CD8-positive, alpha-beta T cell (primary cell): ENCODE measurements at regions of chr5 and their contacts with region 1.

Region 1: GRCh38 chr5:111223889-111224563 is at the start of gene CAMK4:
- DNase-seq: peak; percentile 70 to 94 (median 84)
- ATAC-seq: peak; percentile 88
- H3K4me3 ChIP-seq: peak within 1 kb of the TSS; percentile 90 to 95
- H3K4me3 Mint-ChIP-seq: peak within 1 kb of the TSS; percentile 96
- H3K27ac ChIP-seq: peak within 1 kb of the TSS; percentile 72 to 75
- H3K27ac Mint-ChIP-seq: peak within 1 kb of the TSS; percentile 99
- H3K4me1 ChIP-seq: peaks cover 24% of the 10 kb centered on the region
- H3K4me1 Mint-ChIP-seq: peaks cover 33% of the 10 kb centered on the region
- H3K27me3 ChIP-seq: no peaks in the 10 kb centered on the region
- H3K27me3 Mint-ChIP-seq: no peaks in the 10 kb centered on the region
- CTCF ChIP-seq: peak; percentile 46
- total RNA-seq, gene CAMK4: 165 to 168 TPM

Region 2: GRCh38 chr5:110707260-110707844 is 516.7 kb before region 1 on chr5:
- CTCF ChIA-PET with region 1: no interaction called
- POLR2A ChIA-PET with region 1: no interaction called
- intact Hi-C with region 1: no loop called
- DNase-seq: no peak
- ATAC-seq: no peak
- H3K4me3 ChIP-seq: no peak overlapping the region
- H3K4me3 Mint-ChIP-seq: no peak overlapping the region
- H3K27ac ChIP-seq: no peak overlapping the region
- H3K27ac Mint-ChIP-seq: no peak overlapping the region
- H3K4me1 ChIP-seq: no peaks in the 10 kb centered on the region
- H3K4me1 Mint-ChIP-seq: no peaks in the 10 kb centered on the region
- H3K27me3 ChIP-seq: no peaks in the 10 kb centered on the region
- H3K27me3 Mint-ChIP-seq: peaks cover 24% of the 10 kb centered on the region
- CTCF ChIP-seq: no peak

Region 3: DNA sequence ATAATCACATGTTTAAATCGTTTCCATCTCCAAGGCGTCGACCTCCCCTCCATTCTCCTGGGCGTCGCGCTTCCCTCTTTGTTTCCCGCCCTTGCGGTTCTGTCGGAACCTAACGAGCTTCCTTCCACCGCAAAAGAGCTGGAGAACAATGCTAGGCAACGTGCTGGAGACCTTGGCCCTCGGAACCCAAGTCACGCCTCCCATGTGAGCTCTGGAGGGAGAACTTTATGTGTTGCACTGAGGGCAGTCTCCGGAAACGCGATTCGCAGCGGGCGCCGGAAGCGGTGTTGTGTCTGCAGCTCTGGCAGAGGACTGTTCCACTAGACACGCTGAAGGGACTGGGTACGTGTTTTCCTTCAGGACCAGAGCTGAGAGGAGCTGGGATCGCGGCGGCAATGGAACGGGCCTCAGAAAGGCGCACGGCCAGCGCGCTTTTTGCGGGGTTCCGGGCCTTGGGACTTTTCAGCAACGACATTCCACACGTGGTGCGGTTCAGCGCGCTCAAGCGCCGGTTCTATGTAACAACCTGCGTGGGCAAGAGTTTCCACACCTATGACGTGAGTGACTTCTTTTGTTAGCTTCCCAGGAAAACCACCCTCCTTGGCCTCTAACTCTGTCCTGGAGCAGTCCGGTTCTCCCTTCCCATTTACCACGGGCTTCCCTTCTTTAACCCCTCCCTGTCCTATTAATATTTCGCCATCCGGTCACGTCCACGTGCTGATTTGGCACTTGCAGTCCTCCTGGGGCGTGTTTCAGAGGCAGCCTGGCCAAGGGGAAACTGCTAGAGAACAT is 131.8 kb before region 1 on chr5 and contains the start of gene WDR36:
- CTCF ChIA-PET with region 1: no interaction called
- POLR2A ChIA-PET with region 1: no interaction called
- intact Hi-C with region 1: loop called (anchors 5 kb)
- DNase-seq: peak; percentile 77 to 94 (median 86)
- ATAC-seq: peak; percentile 92
- H3K4me3 ChIP-seq: peak within 1 kb of the TSS; percentile 96
- H3K4me3 Mint-ChIP-seq: peak within 1 kb of the TSS; percentile 95
- H3K27ac ChIP-seq: peak within 1 kb of the TSS; percentile 86 to 89
- H3K27ac Mint-ChIP-seq: peak within 1 kb of the TSS; percentile 94
- H3K4me1 ChIP-seq: peaks cover 24% of the 10 kb centered on the region
- H3K4me1 Mint-ChIP-seq: peaks cover 38% of the 10 kb centered on the region
- H3K27me3 ChIP-seq: no peaks in the 10 kb centered on the region
- H3K27me3 Mint-ChIP-seq: peaks cover 4% of the 10 kb centered on the region
- CTCF ChIP-seq: no peak
- total RNA-seq, gene WDR36: 29.5 to 32.6 TPM

Region 4: DNA sequence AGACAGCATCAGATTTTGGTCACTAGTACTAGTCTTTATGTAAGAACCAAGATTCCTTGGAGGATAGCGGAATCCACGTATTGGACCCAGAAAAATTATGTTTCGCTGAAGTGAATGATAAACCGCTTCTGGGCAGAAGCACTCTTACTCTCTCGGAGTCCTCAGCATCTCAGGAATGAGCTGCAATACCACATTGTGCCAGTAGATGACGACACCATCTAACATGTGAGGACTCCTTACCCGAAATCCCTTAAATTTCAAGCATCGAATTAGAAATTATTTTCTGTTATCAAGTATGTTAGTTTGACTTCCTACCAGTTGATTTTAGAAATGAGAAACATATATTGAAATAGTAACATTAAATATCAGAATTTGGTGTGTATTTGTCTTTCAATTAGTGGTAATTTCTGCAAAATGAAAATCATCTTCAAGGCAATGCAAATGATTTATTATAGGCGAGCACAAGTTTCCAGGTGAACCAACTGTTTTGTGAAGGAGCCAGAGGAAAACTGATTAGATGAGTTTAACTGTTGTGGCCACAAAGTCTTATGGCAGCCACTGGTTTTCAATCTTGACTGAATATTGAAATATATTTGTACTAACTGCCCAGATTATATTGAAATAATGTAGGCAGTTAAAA is 65.8 kb before region 1 on chr5:
- CTCF ChIA-PET with region 1: interaction called, 7 read pairs
- POLR2A ChIA-PET with region 1: interaction called, 3 read pairs
- intact Hi-C with region 1: loop called (anchors 1 to 2 kb)
- DNase-seq: peak; percentile 59 to 87 (median 83)
- ATAC-seq: peak; percentile 99
- H3K4me3 ChIP-seq: no peak overlapping the region
- H3K4me3 Mint-ChIP-seq: no peak overlapping the region
- H3K27ac ChIP-seq: no peak overlapping the region
- H3K27ac Mint-ChIP-seq: no peak overlapping the region
- H3K4me1 ChIP-seq: no peaks in the 10 kb centered on the region
- H3K4me1 Mint-ChIP-seq: peaks cover 3% of the 10 kb centered on the region
- H3K27me3 ChIP-seq: no peaks in the 10 kb centered on the region
- H3K27me3 Mint-ChIP-seq: peaks cover 3% of the 10 kb centered on the region
- CTCF ChIP-seq: peak; percentile 100

Region 5: GRCh38 chr5:111237470-111237869 is 13.4 kb after region 1 on chr5:
- CTCF ChIA-PET with region 1: interaction called, 18 read pairs
- POLR2A ChIA-PET with region 1: interaction called, 35 read pairs
- intact Hi-C with region 1: loop called (anchors 1 to 2 kb)
- DNase-seq: peak in 1 of 9 experiments; percentile 19
- ATAC-seq: peak; percentile 10
- H3K4me3 ChIP-seq: peak overlapping the region in 1 of 2 experiments; percentile 9
- H3K4me3 Mint-ChIP-seq: peak overlapping the region; percentile 79
- H3K27ac ChIP-seq: peak overlapping the region; percentile 36 to 68
- H3K27ac Mint-ChIP-seq: peak overlapping the region; percentile 95
- H3K4me1 ChIP-seq: peaks cover 97% of the 10 kb centered on the region
- H3K4me1 Mint-ChIP-seq: peaks cover 91% of the 10 kb centered on the region
- H3K27me3 ChIP-seq: no peaks in the 10 kb centered on the region
- H3K27me3 Mint-ChIP-seq: no peaks in the 10 kb centered on the region
- CTCF ChIP-seq: no peak

Region 6: DNA sequence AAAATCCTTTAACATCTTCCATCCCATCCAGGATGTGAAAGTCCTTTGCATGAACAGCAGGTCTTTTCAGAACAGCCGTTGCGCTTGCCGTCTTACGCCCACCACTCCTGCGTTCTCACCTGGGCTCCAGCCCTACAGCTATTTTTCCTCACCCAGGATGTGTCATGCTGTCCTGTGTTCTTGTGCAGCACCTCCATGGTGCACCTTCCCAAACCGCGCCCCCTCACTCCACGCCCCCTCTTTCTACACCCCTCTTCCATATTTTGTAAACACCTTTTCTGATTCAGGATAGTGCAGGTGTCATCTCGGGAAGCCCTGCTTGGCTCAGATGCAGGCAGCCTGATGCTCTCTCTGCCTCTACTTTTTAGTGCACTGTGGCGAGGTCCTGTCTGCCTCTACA is 18.6 kb after region 1 on chr5:
- CTCF ChIA-PET with region 1: interaction called, 14 read pairs
- POLR2A ChIA-PET with region 1: interaction called, 35 read pairs
- intact Hi-C with region 1: loop called (anchors 2 kb)
- DNase-seq: no peak
- ATAC-seq: no peak
- H3K4me3 ChIP-seq: no peak overlapping the region
- H3K4me3 Mint-ChIP-seq: peak overlapping the region; percentile 1
- H3K27ac ChIP-seq: no peak overlapping the region
- H3K27ac Mint-ChIP-seq: peak overlapping the region; percentile 80
- H3K4me1 ChIP-seq: peaks cover 81% of the 10 kb centered on the region
- H3K4me1 Mint-ChIP-seq: peaks cover 89% of the 10 kb centered on the region
- H3K27me3 ChIP-seq: no peaks in the 10 kb centered on the region
- H3K27me3 Mint-ChIP-seq: no peaks in the 10 kb centered on the region
- CTCF ChIP-seq: no peak

Region 7: GRCh38 chr5:111254613-111255012 is 30.6 kb after region 1 on chr5:
- CTCF ChIA-PET with region 1: interaction called, 6 read pairs
- POLR2A ChIA-PET with region 1: interaction called, 18 read pairs
- intact Hi-C with region 1: loop called (anchors 2 kb)
- DNase-seq: peak in 6 of 9 experiments; percentile 19 to 93 (median 69)
- ATAC-seq: peak; percentile 86
- H3K4me3 ChIP-seq: no peak overlapping the region
- H3K4me3 Mint-ChIP-seq: peak overlapping the region; percentile 60
- H3K27ac ChIP-seq: peak overlapping the region; percentile 14 to 62
- H3K27ac Mint-ChIP-seq: peak overlapping the region; percentile 90
- H3K4me1 ChIP-seq: peaks cover 68% of the 10 kb centered on the region
- H3K4me1 Mint-ChIP-seq: peaks cover 79% of the 10 kb centered on the region
- H3K27me3 ChIP-seq: no peaks in the 10 kb centered on the region
- H3K27me3 Mint-ChIP-seq: no peaks in the 10 kb centered on the region
- CTCF ChIP-seq: no peak

Region 8: GRCh38 chr5:111530298-111530740 is 306.3 kb after region 1 on chr5:
- CTCF ChIA-PET with region 1: no interaction called
- POLR2A ChIA-PET with region 1: no interaction called
- intact Hi-C with region 1: loop called in 1 of 2 experiments (anchors 5 kb)
- DNase-seq: peak; percentile 63 to 96 (median 83)
- ATAC-seq: peak; percentile 99
- H3K4me3 ChIP-seq: no peak overlapping the region
- H3K4me3 Mint-ChIP-seq: peak overlapping the region; percentile 21
- H3K27ac ChIP-seq: peak overlapping the region; percentile 26 to 81
- H3K27ac Mint-ChIP-seq: peak overlapping the region; percentile 83
- H3K4me1 ChIP-seq: peaks cover 7% of the 10 kb centered on the region
- H3K4me1 Mint-ChIP-seq: peaks cover 12% of the 10 kb centered on the region
- H3K27me3 ChIP-seq: no peaks in the 10 kb centered on the region
- H3K27me3 Mint-ChIP-seq: no peaks in the 10 kb centered on the region
- CTCF ChIP-seq: no peak